ENCODE measurements at regions of chr18 and their contacts with region 1.

Region 1: DNA sequence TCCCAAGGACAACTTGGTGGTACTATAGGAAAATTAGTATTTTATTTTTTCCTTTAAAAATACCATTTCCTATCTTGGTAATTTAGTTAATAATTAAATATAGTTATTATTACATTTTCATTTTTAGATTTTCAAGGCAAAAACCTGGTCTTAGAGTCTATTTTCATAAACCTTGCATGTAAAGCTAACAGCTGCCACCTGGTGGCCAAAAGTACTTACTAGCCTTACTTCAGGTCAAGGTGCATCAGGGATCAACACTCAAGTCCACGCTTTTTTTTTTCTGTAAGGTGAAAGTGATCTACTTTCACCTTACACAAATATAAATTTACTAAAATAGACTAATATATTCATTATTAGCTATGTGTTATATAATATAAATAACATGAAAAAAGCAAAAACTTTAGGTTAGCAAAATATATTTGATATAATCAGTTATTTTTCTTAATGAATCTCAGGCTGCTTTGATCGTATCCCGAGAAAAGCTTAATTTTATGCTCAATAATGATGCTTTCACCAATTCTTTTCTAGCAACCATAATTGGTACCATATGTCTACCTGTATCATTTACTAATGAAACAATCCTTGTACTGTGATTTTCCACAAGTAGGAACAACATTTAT is 62.5 kb downstream of the RELCH start:
- DNase-seq: peak; percentile 78
- H3K4me3 Mint-ChIP-seq: no peak overlapping the region
- H3K27ac Mint-ChIP-seq: no peak overlapping the region
- H3K4me1 Mint-ChIP-seq: no peaks in the 10 kb centered on the region
- H3K27me3 Mint-ChIP-seq: no peaks in the 10 kb centered on the region

Region 2: GRCh38 chr18:61893971-61894750 is 355.4 kb before region 1 on chr18:
- CTCF ChIA-PET with region 1: no interaction called
- POLR2A ChIA-PET with region 1: no interaction called
- intact Hi-C with region 1: no loop called
- DNase-seq: peak; percentile 77
- H3K4me3 Mint-ChIP-seq: peak overlapping the region; percentile 74
- H3K27ac Mint-ChIP-seq: no peak overlapping the region
- H3K4me1 Mint-ChIP-seq: peaks cover 8% of the 10 kb centered on the region
- H3K27me3 Mint-ChIP-seq: peaks cover 32% of the 10 kb centered on the region

Region 3: GRCh38 chr18:62085756-62086155 is 163.8 kb before region 1 on chr18:
- CTCF ChIA-PET with region 1: no interaction called
- POLR2A ChIA-PET with region 1: no interaction called
- intact Hi-C with region 1: no loop called
- DNase-seq: no peak
- H3K4me3 Mint-ChIP-seq: no peak overlapping the region
- H3K27ac Mint-ChIP-seq: no peak overlapping the region
- H3K4me1 Mint-ChIP-seq: peaks cover 22% of the 10 kb centered on the region
- H3K27me3 Mint-ChIP-seq: no peaks in the 10 kb centered on the region

Region 4: GRCh38 chr18:62186774-62187542 is 62.6 kb before region 1 on chr18 and contains the starts of genes PIGN and RELCH:
- CTCF ChIA-PET with region 1: interaction called, 150 read pairs
- POLR2A ChIA-PET with region 1: no interaction called
- intact Hi-C with region 1: loop called (anchors 1 kb)
- DNase-seq: peak; percentile 97
- H3K4me3 Mint-ChIP-seq: peak within 1 kb of the TSS; percentile 99
- H3K27ac Mint-ChIP-seq: peak within 1 kb of the TSS; percentile 93
- H3K4me1 Mint-ChIP-seq: peaks cover 51% of the 10 kb centered on the region
- H3K27me3 Mint-ChIP-seq: no peaks in the 10 kb centered on the region
- total RNA-seq, gene PIGN: 26.2 to 27.8 TPM
- total RNA-seq, gene RELCH: 16.1 to 17.7 TPM

Region 5: GRCh38 chr18:62226047-62226446 is 23.5 kb before region 1 on chr18:
- CTCF ChIA-PET with region 1: interaction called, 14 read pairs
- POLR2A ChIA-PET with region 1: no interaction called
- intact Hi-C with region 1: no loop called
- DNase-seq: no peak
- H3K4me3 Mint-ChIP-seq: no peak overlapping the region
- H3K27ac Mint-ChIP-seq: no peak overlapping the region
- H3K4me1 Mint-ChIP-seq: no peaks in the 10 kb centered on the region
- H3K27me3 Mint-ChIP-seq: no peaks in the 10 kb centered on the region

Region 6: DNA sequence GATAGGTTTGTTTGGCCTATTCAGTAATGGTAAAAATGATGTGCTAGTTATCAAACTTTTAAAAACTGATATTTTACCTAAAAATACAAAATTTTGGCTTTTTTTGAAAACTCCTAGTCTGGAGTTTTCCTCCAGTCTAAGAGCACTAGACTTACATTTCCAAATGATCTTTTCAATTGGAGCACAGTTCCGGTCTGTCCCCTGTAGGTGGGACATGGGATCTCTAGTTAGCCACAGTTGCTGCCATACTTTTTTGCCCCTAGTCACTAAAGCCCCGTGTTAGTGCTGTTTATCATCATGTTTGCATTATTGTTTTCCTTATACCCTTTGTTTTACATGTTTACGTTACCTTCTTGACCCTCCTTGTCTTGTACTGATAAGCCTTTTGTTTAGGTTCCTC is 10.1 kb before region 1 on chr18:
- CTCF ChIA-PET with region 1: interaction called, 17 read pairs
- POLR2A ChIA-PET with region 1: no interaction called
- intact Hi-C with region 1: no loop called
- DNase-seq: no peak
- H3K4me3 Mint-ChIP-seq: no peak overlapping the region
- H3K27ac Mint-ChIP-seq: no peak overlapping the region
- H3K4me1 Mint-ChIP-seq: peaks cover 6% of the 10 kb centered on the region
- H3K27me3 Mint-ChIP-seq: no peaks in the 10 kb centered on the region

Region 7: GRCh38 chr18:62264984-62265383 is 15.4 kb after region 1 on chr18:
- CTCF ChIA-PET with region 1: interaction called, 16 read pairs
- POLR2A ChIA-PET with region 1: no interaction called
- intact Hi-C with region 1: no loop called
- DNase-seq: no peak
- H3K4me3 Mint-ChIP-seq: no peak overlapping the region
- H3K27ac Mint-ChIP-seq: no peak overlapping the region
- H3K4me1 Mint-ChIP-seq: no peaks in the 10 kb centered on the region
- H3K27me3 Mint-ChIP-seq: no peaks in the 10 kb centered on the region

Region 8: GRCh38 chr18:62281684-62282083 is 32.1 kb after region 1 on chr18:
- CTCF ChIA-PET with region 1: interaction called, 14 read pairs
- POLR2A ChIA-PET with region 1: no interaction called
- intact Hi-C with region 1: no loop called
- DNase-seq: no peak
- H3K4me3 Mint-ChIP-seq: no peak overlapping the region
- H3K27ac Mint-ChIP-seq: no peak overlapping the region
- H3K4me1 Mint-ChIP-seq: peaks cover 33% of the 10 kb centered on the region
- H3K27me3 Mint-ChIP-seq: no peaks in the 10 kb centered on the region

Region 9: DNA sequence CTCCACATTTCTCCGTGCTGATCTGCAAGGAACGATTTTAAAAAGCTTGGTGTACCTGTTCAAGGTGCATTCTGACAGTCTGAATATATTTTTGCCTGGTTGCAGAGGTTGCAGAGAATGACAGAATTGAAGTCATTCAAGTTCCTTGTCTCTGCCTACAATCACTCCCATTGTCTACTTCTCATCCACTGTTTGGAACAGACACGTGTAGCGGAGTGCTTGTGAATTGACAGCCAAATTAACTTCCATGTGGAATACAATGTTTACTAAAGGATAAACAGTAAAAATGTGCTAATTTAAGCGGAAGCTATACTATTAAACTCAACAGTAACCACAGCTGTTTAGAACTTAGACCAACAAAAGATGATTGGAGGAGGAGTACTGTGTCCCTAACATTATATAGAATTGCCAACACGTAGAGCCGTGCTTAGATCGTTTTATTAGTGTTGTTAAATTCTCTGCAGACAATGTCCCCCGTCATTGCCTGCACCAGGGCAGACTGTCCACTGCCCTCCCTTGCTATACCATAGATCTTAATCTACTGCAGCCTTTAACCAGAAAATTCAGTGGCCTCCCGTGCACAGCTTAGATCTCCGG is 185.9 kb after region 1 on chr18:
- CTCF ChIA-PET with region 1: no interaction called
- POLR2A ChIA-PET with region 1: no interaction called
- intact Hi-C with region 1: no loop called
- DNase-seq: no peak
- H3K4me3 Mint-ChIP-seq: no peak overlapping the region
- H3K27ac Mint-ChIP-seq: no peak overlapping the region
- H3K4me1 Mint-ChIP-seq: no peaks in the 10 kb centered on the region
- H3K27me3 Mint-ChIP-seq: no peaks in the 10 kb centered on the region